Naive thymus-derived CD4-positive, alpha-beta T cell (primary cell): ENCODE measurements at regions of chr12 and their contacts with region 1.

Region 1: GRCh38 chr12:38389581-38389980 is 73.0 kb downstream of the ALG10B start:
- DNase-seq: no peak
- ATAC-seq: no peak
- H3K4me3 ChIP-seq: no peak overlapping the region
- H3K4me3 Mint-ChIP-seq: no peak overlapping the region
- H3K27ac ChIP-seq: no peak overlapping the region
- H3K27ac Mint-ChIP-seq: no peak overlapping the region
- H3K4me1 ChIP-seq: no peaks in the 10 kb centered on the region
- H3K4me1 Mint-ChIP-seq: no peaks in the 10 kb centered on the region
- H3K27me3 ChIP-seq: no peaks in the 10 kb centered on the region
- H3K27me3 Mint-ChIP-seq: no peaks in the 10 kb centered on the region

Region 2: GRCh38 chr12:38269897-38270296 is 119.7 kb before region 1 on chr12:
- CTCF ChIA-PET with region 1: no interaction called
- POLR2A ChIA-PET with region 1: no interaction called
- intact Hi-C with region 1: no loop called
- DNase-seq: no peak
- ATAC-seq: no peak
- H3K4me3 ChIP-seq: no peak overlapping the region
- H3K4me3 Mint-ChIP-seq: no peak overlapping the region
- H3K27ac ChIP-seq: no peak overlapping the region
- H3K27ac Mint-ChIP-seq: no peak overlapping the region
- H3K4me1 ChIP-seq: no peaks in the 10 kb centered on the region
- H3K4me1 Mint-ChIP-seq: no peaks in the 10 kb centered on the region
- H3K27me3 ChIP-seq: no peaks in the 10 kb centered on the region
- H3K27me3 Mint-ChIP-seq: peaks cover 0 to 14% (median 4%) of the 10 kb centered on the region in 5 donors

Region 3: GRCh38 chr12:38373784-38374183 is 15.8 kb before region 1 on chr12:
- CTCF ChIA-PET with region 1: no interaction called
- POLR2A ChIA-PET with region 1: no interaction called
- intact Hi-C with region 1: loop called in 1 of 2 experiments (anchors 2 kb)
- DNase-seq: no peak
- ATAC-seq: no peak
- H3K4me3 ChIP-seq: no peak overlapping the region
- H3K4me3 Mint-ChIP-seq: no peak overlapping the region
- H3K27ac ChIP-seq: no peak overlapping the region
- H3K27ac Mint-ChIP-seq: no peak overlapping the region
- H3K4me1 ChIP-seq: no peaks in the 10 kb centered on the region
- H3K4me1 Mint-ChIP-seq: no peaks in the 10 kb centered on the region
- H3K27me3 ChIP-seq: no peaks in the 10 kb centered on the region
- H3K27me3 Mint-ChIP-seq: no peaks in the 10 kb centered on the region

Region 4: DNA sequence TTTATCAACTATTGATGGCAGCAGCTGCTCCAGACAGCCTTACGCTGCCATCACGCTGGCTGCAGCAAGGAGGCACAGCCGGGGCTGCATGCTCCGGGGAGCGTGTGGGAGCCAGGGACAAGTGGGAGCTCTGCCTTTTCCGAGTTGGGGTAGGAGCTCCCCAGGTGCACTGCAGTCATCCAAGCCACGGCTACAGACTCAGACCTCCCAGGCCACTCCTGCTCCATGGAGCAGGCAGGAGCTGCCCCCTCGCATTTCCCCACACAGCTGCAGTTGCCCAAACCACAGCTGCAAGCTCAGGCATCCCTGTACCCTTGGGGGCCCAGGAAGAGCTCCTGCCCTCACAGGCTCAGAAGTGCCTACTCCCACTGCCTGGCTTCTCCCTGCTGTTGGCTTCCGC is 331.1 kb after region 1 on chr12:
- CTCF ChIA-PET with region 1: no interaction called
- POLR2A ChIA-PET with region 1: no interaction called
- intact Hi-C with region 1: no loop called
- DNase-seq: no peak
- ATAC-seq: no peak
- H3K4me3 ChIP-seq: no peak overlapping the region
- H3K4me3 Mint-ChIP-seq: no peak overlapping the region
- H3K27ac ChIP-seq: no peak overlapping the region
- H3K27ac Mint-ChIP-seq: no peak overlapping the region
- H3K4me1 ChIP-seq: no peaks in the 10 kb centered on the region
- H3K4me1 Mint-ChIP-seq: no peaks in the 10 kb centered on the region
- H3K27me3 ChIP-seq: no peaks in the 10 kb centered on the region
- H3K27me3 Mint-ChIP-seq: no peaks in the 10 kb centered on the region